Common myeloid progenitor, CD34-positive (primary cell): ENCODE measurements at regions of chr6 and their contacts with region 1.

Region 1: GRCh38 chr6:7207720-7208119 is 100.0 kb downstream of the RREB1 start:
- DNase-seq: no peak
- H3K4me3 ChIP-seq: no peak overlapping the region
- H3K27ac ChIP-seq: no peak overlapping the region
- H3K4me1 ChIP-seq: peaks cover 4 to 12% (median 7%) of the 10 kb centered on the region in 4 experiments
- H3K27me3 ChIP-seq: no peaks in the 10 kb centered on the region

Region 2: DNA sequence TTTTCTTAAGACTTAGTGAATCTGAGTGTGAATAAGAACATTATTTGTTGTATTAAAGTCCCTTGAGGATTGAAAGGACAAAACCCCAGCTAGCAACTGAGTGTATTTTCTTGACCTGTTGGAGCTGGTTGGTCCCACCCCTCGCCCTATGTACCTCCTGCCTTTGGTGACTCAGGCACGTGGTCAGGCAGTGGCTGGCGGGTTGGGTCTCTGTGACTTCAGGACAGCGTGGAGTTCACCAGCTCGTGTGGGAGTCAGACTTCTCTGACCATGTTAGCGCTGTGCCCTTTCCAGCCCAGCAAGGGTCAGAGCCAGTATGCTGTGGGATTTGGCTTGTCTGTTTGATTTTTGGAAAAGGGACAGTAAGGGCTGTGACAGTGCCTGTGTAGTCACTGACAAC is 11.6 kb after region 1 on chr6:
- CTCF ChIA-PET with region 1: interaction called, 18 read pairs
- POLR2A ChIA-PET with region 1: no interaction called
- DNase-seq: peak in 1 of 3 donors; percentile 27
- H3K4me3 ChIP-seq: peak overlapping the region in 1 of 7 experiments; percentile 13
- H3K27ac ChIP-seq: no peak overlapping the region
- H3K4me1 ChIP-seq: peaks cover 4 to 25% (median 5%) of the 10 kb centered on the region in 4 experiments
- H3K27me3 ChIP-seq: no peaks in the 10 kb centered on the region

Region 3: DNA sequence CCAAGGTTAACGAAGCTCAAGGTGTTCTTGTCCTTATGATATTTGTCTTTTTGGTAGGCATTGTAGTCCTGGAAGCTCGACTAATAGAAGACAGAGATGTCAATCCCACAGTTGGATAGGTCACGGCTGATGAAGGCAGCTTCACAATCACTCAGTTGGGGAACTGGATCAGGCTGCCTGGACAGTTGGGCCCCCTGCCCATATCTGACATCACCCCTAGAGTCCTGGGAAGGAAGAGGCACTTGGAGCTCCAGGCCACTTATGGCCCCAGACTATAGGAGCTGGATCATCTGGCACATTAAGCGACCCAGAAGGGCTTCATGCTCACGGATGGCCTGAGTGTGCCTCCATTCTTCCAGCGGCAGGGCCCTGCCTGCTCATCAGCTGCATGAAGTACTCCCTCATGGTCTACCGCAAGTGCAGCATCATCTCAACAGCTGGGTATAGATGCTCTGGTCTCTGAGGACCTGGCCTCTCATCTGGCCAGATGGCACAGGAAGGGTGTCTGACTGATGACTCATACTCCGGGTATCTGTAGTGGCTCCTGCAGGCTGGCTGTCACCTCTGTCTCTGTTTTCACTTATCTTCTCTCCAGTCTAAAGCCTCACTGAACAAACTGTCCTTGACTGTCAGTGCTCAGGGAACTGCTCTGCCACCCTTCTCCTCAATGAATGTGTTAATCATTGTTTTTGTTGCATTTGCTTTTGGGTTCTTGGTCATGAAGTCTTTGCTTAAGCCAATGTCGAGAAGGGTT is 134.4 kb after region 1 on chr6:
- CTCF ChIA-PET with region 1: no interaction called
- POLR2A ChIA-PET with region 1: no interaction called
- DNase-seq: peak in 2 of 3 donors; percentile 56 to 65
- H3K4me3 ChIP-seq: no peak overlapping the region
- H3K27ac ChIP-seq: no peak overlapping the region
- H3K4me1 ChIP-seq: no peaks in the 10 kb centered on the region
- H3K27me3 ChIP-seq: no peaks in the 10 kb centered on the region